Activated T-helper 1 cell treated with anti-CD3 and anti-CD28 coated beads, Interleukin-12 subunit alpha, Interleukin-12 subunit beta, Interleukin-2, Interleukin-4 antibody, amounts not matched to agents 30 ng/mL and 10 ng/mL and 1 ng/mL, durations not matched to agents 14 hours and 24 hours and 36 hours (primary cell): ENCODE measurements at regions of chr14 and their contacts with region 1.

Region 1: DNA sequence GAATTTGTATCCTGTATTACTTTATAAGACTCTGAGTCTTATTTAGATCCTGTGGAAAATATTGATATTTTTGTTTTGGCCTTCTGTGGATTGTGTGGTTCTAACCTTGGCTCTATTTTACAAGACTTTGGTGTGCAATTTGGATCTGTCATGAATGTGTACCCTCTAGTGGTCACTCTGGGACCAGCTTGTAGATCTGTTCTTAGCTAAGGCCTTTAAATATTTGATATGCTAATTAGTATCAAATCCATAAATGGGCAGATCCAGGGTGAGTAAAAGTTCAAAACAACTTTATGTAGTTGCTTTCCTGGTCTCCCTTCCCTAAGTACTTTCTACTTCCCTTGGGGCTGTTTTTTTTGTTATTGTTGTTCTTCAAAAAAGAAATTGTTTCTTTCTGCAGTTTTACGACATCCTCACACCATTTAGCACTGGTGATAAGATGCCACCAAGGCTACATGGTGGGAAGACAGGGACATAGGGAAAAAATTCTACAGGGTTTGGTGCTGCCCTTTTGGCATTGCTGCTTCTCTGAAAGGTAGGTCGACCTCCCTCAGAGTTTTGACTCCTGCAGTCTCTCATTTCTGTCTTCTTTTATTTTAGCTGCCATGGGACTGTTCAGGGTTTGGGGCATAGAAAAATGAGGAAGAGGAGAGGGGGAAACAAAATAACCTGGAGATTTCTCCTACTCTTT is 238.5 kb downstream of the GPHN start:
- DNase-seq: no peak
- H3K4me3 Mint-ChIP-seq: no peak overlapping the region
- H3K27ac Mint-ChIP-seq: no peak overlapping the region
- H3K4me1 Mint-ChIP-seq: no peaks in the 10 kb centered on the region
- H3K27me3 Mint-ChIP-seq: no peaks in the 10 kb centered on the region

Region 2: DNA sequence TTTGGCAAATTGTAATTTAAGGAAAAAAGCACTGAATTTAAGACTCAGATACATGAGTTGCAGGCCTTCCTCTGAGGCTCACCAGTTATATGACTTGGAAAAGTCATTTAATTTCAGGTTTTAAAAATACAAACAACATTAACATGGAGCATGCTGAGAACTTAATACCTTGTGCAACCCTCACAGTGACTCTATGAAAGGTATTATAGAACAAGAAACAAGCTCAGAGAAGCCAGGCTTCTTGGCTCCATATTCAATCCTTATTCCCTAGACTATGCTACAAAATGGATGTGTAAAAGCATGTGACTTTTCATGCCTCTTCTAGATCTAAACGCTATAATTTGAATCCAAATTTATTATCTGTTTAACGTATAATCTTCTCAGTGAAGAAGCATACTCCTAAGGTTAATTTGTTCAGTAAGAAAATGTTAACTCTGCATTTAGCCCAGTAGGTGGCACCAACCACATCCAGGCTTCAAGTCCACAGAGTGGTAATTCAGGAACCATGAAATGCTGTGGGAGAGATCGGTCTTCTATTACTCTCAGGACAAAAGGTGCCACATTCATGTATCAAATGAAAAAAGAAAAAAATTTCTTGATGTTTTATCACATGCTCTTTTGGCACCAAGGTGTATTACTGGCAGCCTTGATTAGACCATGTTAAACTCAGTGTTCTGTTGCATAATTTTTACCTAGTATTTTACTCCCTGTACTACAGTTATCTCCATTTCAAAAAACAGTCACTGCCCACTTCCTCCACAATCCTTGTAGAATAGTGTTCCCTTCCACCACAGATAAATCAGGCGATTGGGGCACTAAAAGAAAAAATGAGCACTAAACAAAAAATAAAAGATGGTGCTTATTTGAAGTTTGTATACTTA is 251.0 kb before region 1 on chr14:
- intact Hi-C with region 1: loop called (anchors 2 kb)
- DNase-seq: peak; percentile 12
- H3K4me3 Mint-ChIP-seq: no peak overlapping the region
- H3K27ac Mint-ChIP-seq: no peak overlapping the region
- H3K4me1 Mint-ChIP-seq: peaks cover 19% of the 10 kb centered on the region
- H3K27me3 Mint-ChIP-seq: peaks cover 22% of the 10 kb centered on the region

Region 3: DNA sequence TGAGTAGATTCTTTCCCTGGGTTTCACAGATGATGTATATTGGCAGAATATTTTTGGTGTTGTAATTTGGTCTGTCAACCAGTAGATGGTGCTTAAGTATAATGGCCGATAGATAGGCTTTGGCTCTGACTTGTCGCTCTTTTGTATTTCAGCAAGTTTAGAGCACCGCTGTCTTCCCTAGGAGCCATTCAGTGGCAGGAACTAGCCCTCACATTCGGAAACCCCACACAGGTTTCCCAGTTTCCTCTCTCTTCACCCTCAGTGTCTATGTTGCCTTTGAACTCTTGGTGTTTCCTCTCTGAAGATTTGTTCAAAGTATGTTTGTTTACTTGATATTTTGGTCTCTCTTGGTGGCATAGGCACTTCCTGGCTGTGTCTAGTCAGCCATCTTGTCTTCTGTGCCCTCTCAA is 136.3 kb before region 1 on chr14:
- intact Hi-C with region 1: loop called (anchors 5 kb)
- DNase-seq: no peak
- H3K4me3 Mint-ChIP-seq: no peak overlapping the region
- H3K27ac Mint-ChIP-seq: peak overlapping the region; percentile 29
- H3K4me1 Mint-ChIP-seq: peaks cover 21% of the 10 kb centered on the region
- H3K27me3 Mint-ChIP-seq: peaks cover 5% of the 10 kb centered on the region

Region 4: DNA sequence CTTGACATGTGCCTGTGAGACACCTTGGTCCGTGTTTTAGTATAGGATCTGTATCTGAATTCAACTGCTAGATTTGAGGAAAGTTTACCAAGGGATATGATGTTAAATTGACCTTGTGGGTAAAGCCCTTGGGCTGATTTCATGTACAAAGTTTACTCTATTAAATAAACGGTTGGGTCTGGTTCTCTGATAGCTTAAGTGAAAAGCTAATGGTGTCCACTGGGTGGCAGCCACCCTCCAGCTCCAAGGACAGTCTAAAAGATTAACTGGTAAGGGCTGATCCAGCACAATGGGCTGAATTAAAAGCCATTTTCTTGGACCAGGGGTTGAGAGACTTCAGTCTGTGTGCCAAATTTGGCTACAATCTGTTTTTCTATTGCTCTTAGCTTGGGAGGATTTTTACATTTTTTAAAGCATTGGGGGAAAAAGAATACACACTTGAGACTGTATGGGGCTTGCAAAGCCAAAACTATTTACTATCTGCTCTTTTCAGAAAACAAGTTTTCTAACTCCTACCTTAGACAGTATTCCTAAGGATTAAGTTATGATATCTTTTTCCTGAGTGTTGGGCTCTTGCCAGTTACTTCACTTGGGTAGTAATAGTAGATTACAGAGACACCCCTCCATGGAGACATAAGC is 122.0 kb before region 1 on chr14:
- intact Hi-C with region 1: loop called (anchors 1 kb)
- DNase-seq: no peak
- H3K4me3 Mint-ChIP-seq: no peak overlapping the region
- H3K27ac Mint-ChIP-seq: no peak overlapping the region
- H3K4me1 Mint-ChIP-seq: peaks cover 4% of the 10 kb centered on the region
- H3K27me3 Mint-ChIP-seq: no peaks in the 10 kb centered on the region

Region 5: DNA sequence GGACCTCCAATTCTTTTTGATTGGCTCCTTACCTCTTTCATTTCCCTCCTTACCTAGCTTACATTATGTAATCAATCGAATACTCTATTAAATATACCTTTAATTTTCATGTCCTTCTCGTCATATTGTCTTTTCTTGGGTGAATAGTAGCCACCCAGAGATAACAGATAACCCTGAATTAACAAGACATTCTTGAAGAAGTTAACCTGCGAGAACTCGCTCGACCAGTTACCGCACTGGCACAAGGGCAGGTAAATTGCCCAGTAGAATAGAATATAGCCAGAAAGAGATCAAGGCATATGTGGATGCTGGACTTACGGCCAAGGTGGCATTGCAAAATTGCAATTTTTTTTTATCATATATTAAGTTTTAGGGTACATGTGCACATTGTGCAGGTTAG is 24.8 kb after region 1 on chr14:
- intact Hi-C with region 1: no loop called
- DNase-seq: no peak
- H3K4me3 Mint-ChIP-seq: no peak overlapping the region
- H3K27ac Mint-ChIP-seq: no peak overlapping the region
- H3K4me1 Mint-ChIP-seq: no peaks in the 10 kb centered on the region
- H3K27me3 Mint-ChIP-seq: no peaks in the 10 kb centered on the region